ENCODE measurements at regions of chr5 and their contacts with region 1.

Region 1: GRCh38 chr5:181191529-181192394 is 13.2 kb downstream of the TRIM7 start:
- DNase-seq: peak; percentile 95 to 97 (median 96)
- H3K4me3 ChIP-seq: peak overlapping the region; percentile 64 to 96 (median 95)
- H3K4me3 Mint-ChIP-seq: peak overlapping the region; percentile 98
- H3K27ac ChIP-seq: peak overlapping the region; percentile 76 to 84
- H3K27ac Mint-ChIP-seq: peak overlapping the region; percentile 89 to 95 (median 92)
- H3K4me1 ChIP-seq: peaks cover 43 to 48% of the 10 kb centered on the region in 2 donors
- H3K4me1 Mint-ChIP-seq: peaks cover 38% of the 10 kb centered on the region
- H3K27me3 ChIP-seq: peaks cover 0 to 14% of the 10 kb centered on the region in 2 donors
- H3K27me3 Mint-ChIP-seq: peaks cover 12 to 31% (median 21%) of the 10 kb centered on the region in 3 donors
- CTCF ChIP-seq: no peak

Region 2: DNA sequence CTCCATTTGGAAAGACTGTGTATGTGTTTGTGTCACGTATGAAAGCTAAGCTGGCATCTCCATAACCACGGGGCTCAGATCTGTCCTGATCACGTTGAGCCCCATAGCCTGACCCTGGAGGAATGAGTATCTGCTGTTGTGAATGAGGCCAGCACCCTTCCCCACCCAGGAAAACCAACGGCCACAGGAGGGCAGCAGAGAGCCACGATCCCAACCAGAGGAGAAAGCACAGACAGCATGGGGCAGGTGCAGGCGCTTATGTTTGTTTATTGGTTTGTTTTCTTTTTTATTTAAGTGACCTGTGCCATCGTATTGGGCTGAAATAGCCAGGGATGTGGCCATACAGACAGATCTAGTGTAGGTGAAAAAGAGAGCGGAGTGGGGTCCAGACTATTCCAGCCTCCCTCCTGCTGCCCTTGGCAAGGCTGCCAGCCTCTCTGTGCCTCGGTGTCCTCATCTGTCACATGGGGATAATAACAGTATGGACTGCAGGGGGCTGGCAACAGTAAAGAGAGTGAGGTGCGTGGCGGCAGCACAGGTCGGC is 32.4 kb before region 1 on chr5:
- intact Hi-C with region 1: no loop called
- DNase-seq: peak; percentile 61 to 74 (median 70)
- H3K4me3 ChIP-seq: no peak overlapping the region
- H3K4me3 Mint-ChIP-seq: peak overlapping the region in 1 of 2 donors; percentile 20
- H3K27ac ChIP-seq: no peak overlapping the region
- H3K27ac Mint-ChIP-seq: peak overlapping the region in 6 of 7 donors; percentile 31 to 89 (median 56)
- H3K4me1 ChIP-seq: peaks cover 10 to 11% of the 10 kb centered on the region in 2 donors
- H3K4me1 Mint-ChIP-seq: peaks cover 21% of the 10 kb centered on the region
- H3K27me3 ChIP-seq: peaks cover 1 to 15% of the 10 kb centered on the region in 2 donors
- H3K27me3 Mint-ChIP-seq: peaks cover 16 to 24% (median 24%) of the 10 kb centered on the region in 3 donors
- CTCF ChIP-seq: peak; percentile 91

Region 3: GRCh38 chr5:181204824-181205760 is 13.3 kb after region 1 on chr5 and contains the start of gene TRIM7:
- intact Hi-C with region 1: loop called in 1 of 2 experiments (anchors 2 kb)
- DNase-seq: peak in 2 of 3 donors; percentile 28 to 30
- H3K4me3 ChIP-seq: peak within 1 kb of the TSS; percentile 50 to 81 (median 56)
- H3K4me3 Mint-ChIP-seq: peak within 1 kb of the TSS; percentile 92 to 99
- H3K27ac ChIP-seq: peak within 1 kb of the TSS; percentile 68 to 75
- H3K27ac Mint-ChIP-seq: peak within 1 kb of the TSS in 6 of 7 donors; percentile 21 to 94 (median 83)
- H3K4me1 ChIP-seq: peaks cover 58 to 72% of the 10 kb centered on the region in 2 donors
- H3K4me1 Mint-ChIP-seq: peaks cover 63% of the 10 kb centered on the region
- H3K27me3 ChIP-seq: peaks cover 6 to 27% of the 10 kb centered on the region in 2 donors
- H3K27me3 Mint-ChIP-seq: peaks cover 25 to 36% (median 27%) of the 10 kb centered on the region in 3 donors
- CTCF ChIP-seq: no peak
- polyA plus RNA-seq, gene TRIM7: 9.5 to 12.8 (median 10.3) TPM

Region 4: DNA sequence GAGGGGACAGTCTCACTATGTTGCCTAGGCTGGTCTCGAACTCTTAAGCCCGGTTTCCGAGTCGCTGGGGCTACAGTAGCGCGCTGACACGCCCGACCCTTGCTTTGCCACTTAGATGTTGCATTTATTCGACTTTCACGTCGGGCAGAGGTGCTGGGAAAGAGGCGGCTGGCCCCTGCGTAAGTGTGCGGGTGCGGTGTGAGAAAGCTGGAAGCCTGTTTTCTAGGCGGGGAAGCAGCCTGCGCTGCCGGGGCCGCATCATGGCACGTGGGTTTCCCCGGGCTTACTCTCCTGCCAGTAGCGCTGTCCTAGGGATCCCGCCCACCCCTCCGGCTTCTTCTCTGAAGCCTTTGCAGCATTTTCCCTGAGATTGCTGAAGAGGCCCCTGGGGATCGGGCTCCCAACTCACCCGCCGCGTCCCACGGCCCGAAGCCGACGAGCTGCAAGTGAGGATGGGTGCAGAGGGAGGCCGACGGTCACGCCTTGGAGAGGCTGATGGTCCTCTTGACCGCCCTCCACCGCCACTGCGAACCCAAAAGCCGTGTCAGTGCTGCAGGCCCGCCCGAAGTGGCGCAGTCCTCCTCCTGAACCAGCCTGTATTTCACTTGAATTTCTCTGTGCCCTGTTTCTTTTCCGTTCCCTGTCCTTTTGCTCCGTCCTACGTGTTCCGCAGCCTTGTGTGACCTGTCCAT is 25.5 kb after region 1 on chr5:
- intact Hi-C with region 1: loop called (anchors 1 to 2 kb)
- DNase-seq: peak in 2 of 3 donors; percentile 27 to 37
- H3K4me3 ChIP-seq: peak overlapping the region; percentile 0 to 70 (median 22)
- H3K4me3 Mint-ChIP-seq: peak overlapping the region; percentile 70 to 90
- H3K27ac ChIP-seq: no peak overlapping the region
- H3K27ac Mint-ChIP-seq: peak overlapping the region in 2 of 7 donors; percentile 50 to 79
- H3K4me1 ChIP-seq: peaks cover 39 to 40% of the 10 kb centered on the region in 2 donors
- H3K4me1 Mint-ChIP-seq: peaks cover 40% of the 10 kb centered on the region
- H3K27me3 ChIP-seq: peaks cover 13 to 42% of the 10 kb centered on the region in 2 donors
- H3K27me3 Mint-ChIP-seq: peaks cover 28 to 43% (median 33%) of the 10 kb centered on the region in 3 donors
- CTCF ChIP-seq: no peak

Region 5: DNA sequence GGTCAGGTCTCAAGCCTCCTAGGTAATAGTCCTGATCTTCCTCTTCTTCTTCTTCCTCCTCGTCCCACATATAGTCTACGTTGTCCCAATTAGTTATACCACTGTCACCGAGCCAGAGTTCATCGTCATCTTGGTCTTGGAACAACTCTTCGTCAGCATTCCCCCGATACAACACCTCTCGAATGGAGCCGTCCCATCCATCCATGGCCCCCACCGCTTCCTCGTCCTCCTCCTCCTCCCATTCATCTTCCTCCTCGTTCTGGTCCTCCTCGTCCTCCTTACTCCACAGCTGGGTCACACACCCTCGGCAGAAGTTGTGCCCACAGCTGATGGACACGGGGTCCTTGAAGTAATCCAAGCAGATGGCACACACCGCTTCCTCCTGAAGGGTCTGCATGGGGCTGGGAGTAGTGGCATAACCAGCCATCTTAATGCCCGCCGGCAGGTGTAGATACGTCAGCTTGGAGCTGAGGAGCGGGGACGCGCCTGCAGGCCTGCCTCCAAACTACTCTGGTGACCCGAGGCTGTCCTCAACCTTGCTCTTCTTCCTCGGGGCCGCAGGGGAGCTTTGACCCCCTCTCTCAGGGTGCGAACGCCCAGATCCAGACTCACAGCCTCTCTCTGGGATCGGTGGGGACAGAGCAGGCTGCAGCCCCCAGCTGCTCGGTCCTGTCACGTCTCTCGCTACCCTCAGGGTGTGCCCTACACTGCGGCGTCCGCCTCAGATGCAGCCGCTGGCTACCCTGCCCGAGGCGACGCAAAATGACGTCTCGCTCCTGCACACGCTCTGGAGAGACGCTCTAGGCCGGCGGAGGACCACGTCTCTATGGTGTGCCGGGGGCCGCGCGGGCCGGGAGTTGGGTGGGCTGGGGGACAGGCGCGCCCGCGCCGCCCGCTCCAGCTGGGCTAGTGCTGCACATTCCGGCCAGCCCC is 68.9 kb after region 1 on chr5 and contains the start of gene TRIM52:
- intact Hi-C with region 1: loop called in 1 of 2 experiments (anchors 5 kb)
- DNase-seq: peak; percentile 85 to 89 (median 87)
- H3K4me3 ChIP-seq: peak within 1 kb of the TSS; percentile 80 to 97 (median 89)
- H3K4me3 Mint-ChIP-seq: peak within 1 kb of the TSS; percentile 95 to 96
- H3K27ac ChIP-seq: peak within 1 kb of the TSS; percentile 93 to 96
- H3K27ac Mint-ChIP-seq: peak within 1 kb of the TSS; percentile 93 to 99 (median 97)
- H3K4me1 ChIP-seq: peaks cover 25 to 46% of the 10 kb centered on the region in 2 donors
- H3K4me1 Mint-ChIP-seq: peaks cover 46% of the 10 kb centered on the region
- H3K27me3 ChIP-seq: no peaks in the 10 kb centered on the region
- H3K27me3 Mint-ChIP-seq: no peaks in the 10 kb centered on the region
- CTCF ChIP-seq: no peak
- polyA plus RNA-seq, gene TRIM52: 5.7 to 26.0 (median 8.5) TPM

Measured in CD14-positive monocyte (primary cell).